Caco-2 (cell line): ENCODE measurements at regions of chr14 and their contacts with region 1.

Region 1: DNA sequence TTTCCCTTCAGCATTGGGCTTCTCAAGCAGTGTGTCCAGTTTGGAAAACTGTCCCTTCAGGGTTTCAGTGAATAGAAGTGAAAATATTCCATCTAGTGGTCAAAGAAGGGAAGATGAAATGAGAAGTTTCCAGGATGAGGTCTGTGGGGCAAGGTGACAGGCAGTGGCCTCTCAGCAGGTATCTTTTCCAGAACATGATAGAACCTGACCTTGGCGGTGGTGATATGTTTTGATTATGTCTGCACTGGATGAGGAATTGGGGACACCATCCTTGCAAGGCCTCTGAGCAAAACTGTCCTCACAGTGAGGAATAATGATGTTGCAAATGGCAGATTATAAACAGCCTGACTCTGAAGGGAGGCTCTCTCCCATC is 4.7 kb downstream of the GPX2 start:
- DNase-seq: no peak
- H3K4me3 ChIP-seq: no peak overlapping the region
- H3K4me3 Mint-ChIP-seq: no peak overlapping the region
- H3K27ac Mint-ChIP-seq: peak overlapping the region; percentile 59
- H3K4me1 ChIP-seq: peaks cover 64% of the 10 kb centered on the region
- H3K4me1 Mint-ChIP-seq: peaks cover 56% of the 10 kb centered on the region
- H3K27me3 ChIP-seq: no peaks in the 10 kb centered on the region
- H3K27me3 Mint-ChIP-seq: no peaks in the 10 kb centered on the region
- CTCF ChIP-seq: no peak

Region 2: DNA sequence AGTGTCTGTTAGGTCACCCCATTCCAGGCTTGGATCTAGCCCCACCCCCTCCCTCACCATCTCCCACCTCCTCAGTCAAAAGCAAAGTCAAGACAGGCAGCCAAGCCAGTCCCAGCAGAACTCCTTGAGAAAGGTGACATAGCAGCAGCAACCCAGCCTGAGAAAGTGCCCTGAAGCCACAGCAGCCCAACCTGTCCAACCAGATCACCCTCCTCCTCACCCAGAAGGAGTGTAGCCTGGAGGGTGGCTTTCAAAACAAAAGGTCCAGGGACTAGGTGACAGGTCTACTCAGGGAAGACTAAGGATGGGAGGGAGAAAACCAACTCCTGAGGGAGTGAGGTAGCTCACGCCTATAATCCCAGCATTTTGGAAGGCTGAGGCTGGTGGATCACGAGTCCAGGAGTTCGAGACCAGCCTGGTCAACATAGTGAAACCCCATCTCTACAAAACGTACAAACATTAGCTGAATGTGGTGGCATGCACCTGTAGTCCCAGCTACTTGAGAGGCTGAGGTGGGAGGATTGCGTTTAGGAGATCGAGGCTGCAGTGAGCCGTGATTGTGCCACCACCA is 29.3 kb after region 1 on chr14:
- CTCF ChIA-PET with region 1: interaction called, 4 read pairs
- POLR2A ChIA-PET with region 1: no interaction called
- intact Hi-C with region 1: loop called (anchors 2 kb)
- DNase-seq: peak; percentile 80 to 83
- H3K4me3 ChIP-seq: no peak overlapping the region
- H3K4me3 Mint-ChIP-seq: peak overlapping the region; percentile 15
- H3K27ac Mint-ChIP-seq: peak overlapping the region; percentile 48
- H3K4me1 ChIP-seq: peaks cover 23% of the 10 kb centered on the region
- H3K4me1 Mint-ChIP-seq: peaks cover 18% of the 10 kb centered on the region
- H3K27me3 ChIP-seq: no peaks in the 10 kb centered on the region
- H3K27me3 Mint-ChIP-seq: no peaks in the 10 kb centered on the region
- CTCF ChIP-seq: no peak